WTC11 (cell line): ENCODE measurements at regions of chr3 and their contacts with region 1.

Region 1: GRCh38 chr3:46276502-46277099 is 34.3 kb downstream of the CCR3 start:
- DNase-seq: peak; percentile 79
- ATAC-seq: peak; percentile 95
- H3K4me3 Mint-ChIP-seq: no peak overlapping the region
- H3K27ac Mint-ChIP-seq: no peak overlapping the region
- H3K4me1 Mint-ChIP-seq: no peaks in the 10 kb centered on the region
- H3K27me3 Mint-ChIP-seq: peaks cover 9% of the 10 kb centered on the region
- CTCF ChIP-seq: peak; percentile 67

Region 2: GRCh38 chr3:46214751-46215352 is 61.7 kb before region 1 on chr3:
- CTCF ChIA-PET with region 1: interaction called, 10 read pairs
- POLR2A ChIA-PET with region 1: no interaction called
- DNase-seq: peak; percentile 63
- ATAC-seq: peak; percentile 97
- H3K4me3 Mint-ChIP-seq: no peak overlapping the region
- H3K27ac Mint-ChIP-seq: no peak overlapping the region
- H3K4me1 Mint-ChIP-seq: 0 out of 2 replicates have a peak, but pooled peaks cover 4% of the 10 kb centered on the region
- H3K27me3 Mint-ChIP-seq: peaks cover 2% of the 10 kb centered on the region; the same call in 1 of the 2 replicates
- CTCF ChIP-seq: no peak

Region 3: DNA sequence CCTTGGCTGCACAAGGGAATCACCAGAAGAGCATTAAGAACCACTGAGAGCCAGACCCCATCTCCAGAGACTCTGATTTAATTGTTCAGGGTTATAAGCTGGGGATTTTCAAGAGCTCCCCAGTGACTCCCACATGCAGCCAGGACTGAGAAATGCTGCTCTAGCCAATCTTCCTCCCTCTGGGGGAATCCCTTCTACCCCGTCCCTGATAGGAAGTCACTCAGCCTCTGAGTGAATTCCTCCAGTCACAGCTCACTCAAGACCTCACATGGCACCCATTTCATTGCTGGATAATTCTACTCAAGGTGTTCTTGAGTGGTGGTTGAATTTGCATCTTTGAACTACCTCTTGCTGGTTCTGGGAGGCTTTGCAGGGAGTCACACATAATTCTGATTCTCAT is 23.6 kb before region 1 on chr3:
- CTCF ChIA-PET with region 1: no interaction called
- POLR2A ChIA-PET with region 1: no interaction called
- DNase-seq: no peak
- ATAC-seq: no peak
- H3K4me3 Mint-ChIP-seq: no peak overlapping the region
- H3K27ac Mint-ChIP-seq: no peak overlapping the region
- H3K4me1 Mint-ChIP-seq: no peaks in the 10 kb centered on the region
- H3K27me3 Mint-ChIP-seq: no peaks in the 10 kb centered on the region; the same call in 1 of the 2 replicates
- CTCF ChIP-seq: no peak

Region 4: GRCh38 chr3:46266598-46266997 is 10.0 kb before region 1 on chr3:
- CTCF ChIA-PET with region 1: interaction called, 12 read pairs
- POLR2A ChIA-PET with region 1: no interaction called
- DNase-seq: no peak
- ATAC-seq: no peak
- H3K4me3 Mint-ChIP-seq: no peak overlapping the region
- H3K27ac Mint-ChIP-seq: no peak overlapping the region
- H3K4me1 Mint-ChIP-seq: peaks cover 12% of the 10 kb centered on the region
- H3K27me3 Mint-ChIP-seq: peaks cover 4% of the 10 kb centered on the region; the same call in 1 of the 2 replicates
- CTCF ChIP-seq: no peak

Region 5: DNA sequence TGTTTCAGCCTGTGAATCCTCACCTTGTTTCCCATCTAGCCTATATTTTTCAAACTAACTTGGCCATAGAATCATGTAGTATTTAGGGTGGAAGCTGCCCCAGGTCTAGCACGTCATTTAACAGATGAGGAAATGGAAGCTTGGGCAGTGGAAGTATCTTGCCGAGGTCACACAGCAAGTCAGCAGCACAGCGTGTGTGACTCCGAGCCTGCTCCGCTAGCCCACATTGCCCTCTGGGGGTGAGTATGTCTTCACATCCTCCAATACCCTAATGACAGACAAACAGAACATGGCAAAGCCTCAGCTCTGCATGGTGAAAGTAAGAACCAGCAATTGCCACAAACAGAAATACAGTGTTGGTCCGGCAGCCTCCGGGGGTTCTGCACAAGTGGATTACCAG is 92.0 kb after region 1 on chr3:
- CTCF ChIA-PET with region 1: interaction called, 29 read pairs
- POLR2A ChIA-PET with region 1: no interaction called
- DNase-seq: peak; percentile 59
- ATAC-seq: peak; percentile 98
- H3K4me3 Mint-ChIP-seq: no peak overlapping the region
- H3K27ac Mint-ChIP-seq: no peak overlapping the region
- H3K4me1 Mint-ChIP-seq: no peaks in the 10 kb centered on the region
- H3K27me3 Mint-ChIP-seq: peaks cover 2% of the 10 kb centered on the region; the same call in 1 of the 2 replicates
- CTCF ChIP-seq: no peak

Region 6: DNA sequence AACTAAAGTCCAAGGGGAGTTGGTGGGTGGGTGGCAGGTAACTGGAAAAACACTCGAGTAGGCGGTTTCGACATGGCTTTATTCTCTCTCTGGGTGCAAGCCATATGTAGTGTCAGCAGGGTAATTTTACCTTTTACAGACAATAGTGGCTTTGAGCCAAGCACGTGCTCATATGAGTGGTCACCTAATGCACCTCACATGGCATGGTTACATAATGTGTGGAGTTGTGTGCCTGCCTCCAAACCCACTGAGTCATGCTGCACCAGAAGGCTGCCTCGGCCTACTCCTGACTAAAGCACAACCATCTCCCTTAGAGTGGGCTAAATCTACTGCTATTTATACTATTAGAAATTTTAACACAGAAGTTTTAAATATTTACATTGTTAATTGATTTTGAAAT is 147.0 kb after region 1 on chr3:
- CTCF ChIA-PET with region 1: interaction called, 12 read pairs
- POLR2A ChIA-PET with region 1: no interaction called
- DNase-seq: no peak
- ATAC-seq: no peak
- H3K4me3 Mint-ChIP-seq: no peak overlapping the region
- H3K27ac Mint-ChIP-seq: no peak overlapping the region
- H3K4me1 Mint-ChIP-seq: peaks cover 4% of the 10 kb centered on the region
- H3K27me3 Mint-ChIP-seq: no peaks in the 10 kb centered on the region
- CTCF ChIP-seq: no peak